ENCODE measurements at regions of chr16 and their contacts with region 1.

Region 1: GRCh38 chr16:48623304-48624016 is 13.5 kb upstream of the N4BP1 start:
- DNase-seq: peak; percentile 67 to 82 (median 72)
- H3K4me3 ChIP-seq: peak overlapping the region; percentile 78
- H3K4me3 Mint-ChIP-seq: peak overlapping the region; percentile 0 to 84 (median 69)
- H3K27ac ChIP-seq: no peak overlapping the region
- H3K27ac Mint-ChIP-seq: peak overlapping the region in 4 of 8 donors; percentile 47 to 82 (median 76)
- H3K4me1 ChIP-seq: peaks cover 18% of the 10 kb centered on the region
- H3K4me1 Mint-ChIP-seq: peaks cover 9 to 20% (median 17%) of the 10 kb centered on the region in 3 donors
- H3K27me3 ChIP-seq: no peaks in the 10 kb centered on the region
- H3K27me3 Mint-ChIP-seq: peaks cover 0 to 5% of the 10 kb centered on the region in 2 donors

Region 2: DNA sequence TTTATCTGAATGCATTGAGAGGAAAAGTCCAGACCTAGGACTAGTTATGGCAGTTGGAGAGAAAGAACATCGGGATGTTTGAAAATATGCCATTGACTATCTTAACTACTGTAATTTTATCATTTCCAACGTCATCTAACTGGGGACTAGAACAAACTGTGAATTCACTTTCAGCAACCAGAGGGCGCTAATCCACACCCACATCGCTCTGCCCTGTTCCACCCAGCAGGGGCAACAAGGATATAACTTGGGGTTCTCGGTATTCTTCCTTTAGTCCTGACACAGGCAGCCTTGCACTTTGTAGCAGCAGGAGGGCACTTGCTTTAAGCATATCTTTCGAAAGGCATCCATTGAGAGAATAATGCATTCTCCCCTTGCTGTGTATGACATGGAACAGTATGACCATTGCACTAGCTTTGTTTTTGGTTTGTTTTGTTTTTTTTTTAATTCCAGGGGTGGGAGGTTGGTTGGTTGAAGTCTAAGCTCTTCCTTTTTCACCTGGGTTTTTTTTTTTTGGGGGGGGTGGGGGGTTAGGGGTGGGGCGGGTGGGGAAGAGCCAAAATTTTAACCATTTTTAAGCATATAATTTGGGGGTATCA is 269.8 kb before region 1 on chr16:
- CTCF ChIA-PET with region 1: interaction called, 135 read pairs
- POLR2A ChIA-PET with region 1: interaction called, 3 read pairs
- DNase-seq: peak; percentile 44 to 78 (median 68)
- H3K4me3 ChIP-seq: no peak overlapping the region
- H3K4me3 Mint-ChIP-seq: no peak overlapping the region
- H3K27ac ChIP-seq: no peak overlapping the region
- H3K27ac Mint-ChIP-seq: peak overlapping the region in 7 of 8 donors; percentile 45 to 87 (median 66)
- H3K4me1 ChIP-seq: peaks cover 6% of the 10 kb centered on the region
- H3K4me1 Mint-ChIP-seq: peaks cover 5 to 11% (median 9%) of the 10 kb centered on the region in 3 donors
- H3K27me3 ChIP-seq: no peaks in the 10 kb centered on the region
- H3K27me3 Mint-ChIP-seq: no peaks in the 10 kb centered on the region

Region 3: GRCh38 chr16:48385272-48386150 is 237.9 kb before region 1 on chr16 and contains the start of gene SIAH1:
- CTCF ChIA-PET with region 1: interaction called, 12 read pairs
- POLR2A ChIA-PET with region 1: interaction called, 3 read pairs
- DNase-seq: peak; percentile 85 to 90 (median 87)
- H3K4me3 ChIP-seq: peak within 1 kb of the TSS; percentile 70
- H3K4me3 Mint-ChIP-seq: peak within 1 kb of the TSS; percentile 89 to 99 (median 92)
- H3K27ac ChIP-seq: peak within 1 kb of the TSS; percentile 53
- H3K27ac Mint-ChIP-seq: peak within 1 kb of the TSS; percentile 80 to 97 (median 92)
- H3K4me1 ChIP-seq: peaks cover 15% of the 10 kb centered on the region
- H3K4me1 Mint-ChIP-seq: peaks cover 13 to 29% (median 14%) of the 10 kb centered on the region in 3 donors
- H3K27me3 ChIP-seq: no peaks in the 10 kb centered on the region
- H3K27me3 Mint-ChIP-seq: peaks cover 0 to 3% of the 10 kb centered on the region in 2 donors
- total RNA-seq, gene SIAH1: 11.6 to 13.3 TPM

Region 4: GRCh38 chr16:48535831-48536613 is 87.4 kb before region 1 on chr16:
- CTCF ChIA-PET with region 1: interaction called, 31 read pairs
- POLR2A ChIA-PET with region 1: no interaction called
- DNase-seq: no peak
- H3K4me3 ChIP-seq: no peak overlapping the region
- H3K4me3 Mint-ChIP-seq: no peak overlapping the region
- H3K27ac ChIP-seq: no peak overlapping the region
- H3K27ac Mint-ChIP-seq: peak overlapping the region in 1 of 8 donors; percentile 58
- H3K4me1 ChIP-seq: peaks cover 12% of the 10 kb centered on the region
- H3K4me1 Mint-ChIP-seq: peaks cover 11 to 34% (median 16%) of the 10 kb centered on the region in 3 donors
- H3K27me3 ChIP-seq: no peaks in the 10 kb centered on the region
- H3K27me3 Mint-ChIP-seq: no peaks in the 10 kb centered on the region

Region 5: DNA sequence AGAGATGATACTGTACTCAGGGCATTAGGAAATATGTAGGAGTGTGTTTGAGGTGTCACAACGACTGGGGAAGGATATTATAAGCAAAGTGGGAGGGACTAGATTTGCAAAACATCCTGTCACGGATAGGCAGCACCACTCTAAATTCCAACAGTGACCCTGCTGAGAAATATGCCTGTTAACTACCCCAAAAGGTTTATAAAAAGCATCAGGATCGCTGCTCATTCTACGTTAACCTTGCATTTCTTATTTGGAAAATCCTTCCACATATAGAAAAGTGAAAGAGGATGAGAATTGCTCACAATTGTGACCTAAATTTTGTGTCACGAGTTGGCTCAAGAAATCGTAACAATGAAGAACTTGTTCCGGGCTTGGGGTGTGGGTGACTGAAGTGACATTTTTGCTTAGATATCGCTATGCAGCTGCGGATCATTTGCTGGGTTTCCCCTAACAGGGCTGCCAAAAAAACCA is 65.1 kb before region 1 on chr16:
- CTCF ChIA-PET with region 1: interaction called, 12 read pairs
- POLR2A ChIA-PET with region 1: no interaction called
- DNase-seq: no peak
- H3K4me3 ChIP-seq: no peak overlapping the region
- H3K4me3 Mint-ChIP-seq: peak overlapping the region in 6 of 7 donors; percentile 45 to 76 (median 70)
- H3K27ac ChIP-seq: no peak overlapping the region
- H3K27ac Mint-ChIP-seq: peak overlapping the region; percentile 55 to 94 (median 78)
- H3K4me1 ChIP-seq: peaks cover 47% of the 10 kb centered on the region
- H3K4me1 Mint-ChIP-seq: peaks cover 64 to 92% (median 91%) of the 10 kb centered on the region in 3 donors
- H3K27me3 ChIP-seq: no peaks in the 10 kb centered on the region
- H3K27me3 Mint-ChIP-seq: no peaks in the 10 kb centered on the region

Region 6: DNA sequence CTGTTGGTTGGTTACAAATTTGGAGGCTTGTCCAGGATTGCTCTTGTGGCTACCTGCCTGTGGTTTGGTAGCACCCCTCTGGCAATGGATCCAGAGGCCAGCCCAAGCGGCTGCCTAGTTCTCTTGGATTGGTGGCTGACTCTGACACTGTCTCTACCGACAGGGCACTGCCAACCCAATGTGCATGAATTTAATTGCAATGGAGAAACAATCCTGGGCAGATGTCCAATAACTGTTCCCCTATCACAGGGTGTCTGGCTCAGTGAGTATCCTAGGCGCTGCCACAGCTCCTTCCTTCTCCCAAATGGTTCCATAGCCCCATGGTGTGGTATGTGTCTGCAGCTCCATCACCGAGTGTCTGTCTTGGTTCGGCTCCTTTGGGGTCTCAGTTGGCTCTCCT is 33.0 kb before region 1 on chr16:
- CTCF ChIA-PET with region 1: interaction called, 11 read pairs
- POLR2A ChIA-PET with region 1: no interaction called
- DNase-seq: no peak
- H3K4me3 ChIP-seq: no peak overlapping the region
- H3K4me3 Mint-ChIP-seq: no peak overlapping the region
- H3K27ac ChIP-seq: no peak overlapping the region
- H3K27ac Mint-ChIP-seq: peak overlapping the region in 3 of 8 donors; percentile 1 to 71 (median 9)
- H3K4me1 ChIP-seq: peaks cover 30% of the 10 kb centered on the region
- H3K4me1 Mint-ChIP-seq: peaks cover 59 to 79% (median 76%) of the 10 kb centered on the region in 3 donors
- H3K27me3 ChIP-seq: no peaks in the 10 kb centered on the region
- H3K27me3 Mint-ChIP-seq: no peaks in the 10 kb centered on the region

Region 7: GRCh38 chr16:48659940-48660339 is 36.5 kb after region 1 on chr16:
- CTCF ChIA-PET with region 1: no interaction called
- POLR2A ChIA-PET with region 1: no interaction called
- DNase-seq: no peak
- H3K4me3 ChIP-seq: no peak overlapping the region
- H3K4me3 Mint-ChIP-seq: no peak overlapping the region
- H3K27ac ChIP-seq: no peak overlapping the region
- H3K27ac Mint-ChIP-seq: peak overlapping the region in 1 of 8 donors; percentile 72
- H3K4me1 ChIP-seq: no peaks in the 10 kb centered on the region
- H3K4me1 Mint-ChIP-seq: no peaks in the 10 kb centered on the region
- H3K27me3 ChIP-seq: no peaks in the 10 kb centered on the region
- H3K27me3 Mint-ChIP-seq: peaks cover 2 to 4% of the 10 kb centered on the region in 2 donors

Region 8: DNA sequence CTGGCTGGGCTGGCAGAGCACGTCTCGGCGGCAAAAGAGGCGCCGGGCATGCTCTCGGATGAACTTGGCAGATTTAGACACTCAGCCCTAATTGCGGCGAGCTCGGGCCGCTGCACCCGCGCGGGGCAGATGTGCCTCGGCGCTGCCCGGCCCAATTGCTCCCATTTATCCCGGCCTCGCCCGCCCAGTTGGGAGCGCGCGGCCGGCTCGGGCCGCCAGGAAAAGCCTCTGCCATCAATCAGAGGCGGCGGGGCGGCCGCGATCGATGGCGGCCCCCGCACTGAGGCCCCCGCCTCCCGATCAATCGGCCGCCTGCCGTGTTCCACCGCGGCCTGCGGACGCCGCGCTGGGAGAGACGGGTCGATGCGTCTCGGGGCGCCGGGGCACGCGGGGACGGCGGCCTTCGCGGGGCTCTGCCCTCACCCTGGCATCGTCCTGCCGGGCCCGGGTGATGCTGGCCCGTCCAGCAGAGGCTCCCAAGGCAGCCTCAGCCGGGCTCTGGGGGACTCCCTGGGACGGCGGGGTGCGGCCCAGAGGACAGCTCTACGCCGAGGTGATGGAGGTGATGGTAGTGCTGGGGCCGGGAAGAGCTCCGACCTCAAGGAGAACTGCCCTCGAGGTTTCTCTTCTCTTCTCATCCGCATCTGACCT is 187.5 kb after region 1 on chr16:
- CTCF ChIA-PET with region 1: no interaction called
- POLR2A ChIA-PET with region 1: no interaction called
- DNase-seq: no peak
- H3K4me3 ChIP-seq: no peak overlapping the region
- H3K4me3 Mint-ChIP-seq: no peak overlapping the region
- H3K27ac ChIP-seq: no peak overlapping the region
- H3K27ac Mint-ChIP-seq: no peak overlapping the region
- H3K4me1 ChIP-seq: no peaks in the 10 kb centered on the region
- H3K4me1 Mint-ChIP-seq: no peaks in the 10 kb centered on the region
- H3K27me3 ChIP-seq: no peaks in the 10 kb centered on the region
- H3K27me3 Mint-ChIP-seq: peaks cover 19 to 34% of the 10 kb centered on the region in 2 donors

Measured in CD8-positive, alpha-beta memory T cell (primary cell).